ENCODE measurements at regions of chr10 and their contacts with region 1.

Region 1: GRCh38 chr10:114304017-114304570 is 65.0 kb downstream of the VWA2 start:
- DNase-seq: peak; percentile 73 to 90
- ATAC-seq: peak; percentile 80 to 91 (median 87)
- H3K4me3 ChIP-seq: peak overlapping the region in 9 of 10 donors; percentile 26 to 51 (median 44)
- H3K27ac ChIP-seq: peak overlapping the region in 8 of 10 donors; percentile 14 to 65 (median 44)
- H3K4me1 ChIP-seq: peaks cover 7 to 46% (median 28%) of the 10 kb centered on the region in 9 donors
- H3K27me3 ChIP-seq: no peaks in the 10 kb centered on the region
- CTCF ChIP-seq: peak; percentile 72 to 86 (median 78)

Region 2: DNA sequence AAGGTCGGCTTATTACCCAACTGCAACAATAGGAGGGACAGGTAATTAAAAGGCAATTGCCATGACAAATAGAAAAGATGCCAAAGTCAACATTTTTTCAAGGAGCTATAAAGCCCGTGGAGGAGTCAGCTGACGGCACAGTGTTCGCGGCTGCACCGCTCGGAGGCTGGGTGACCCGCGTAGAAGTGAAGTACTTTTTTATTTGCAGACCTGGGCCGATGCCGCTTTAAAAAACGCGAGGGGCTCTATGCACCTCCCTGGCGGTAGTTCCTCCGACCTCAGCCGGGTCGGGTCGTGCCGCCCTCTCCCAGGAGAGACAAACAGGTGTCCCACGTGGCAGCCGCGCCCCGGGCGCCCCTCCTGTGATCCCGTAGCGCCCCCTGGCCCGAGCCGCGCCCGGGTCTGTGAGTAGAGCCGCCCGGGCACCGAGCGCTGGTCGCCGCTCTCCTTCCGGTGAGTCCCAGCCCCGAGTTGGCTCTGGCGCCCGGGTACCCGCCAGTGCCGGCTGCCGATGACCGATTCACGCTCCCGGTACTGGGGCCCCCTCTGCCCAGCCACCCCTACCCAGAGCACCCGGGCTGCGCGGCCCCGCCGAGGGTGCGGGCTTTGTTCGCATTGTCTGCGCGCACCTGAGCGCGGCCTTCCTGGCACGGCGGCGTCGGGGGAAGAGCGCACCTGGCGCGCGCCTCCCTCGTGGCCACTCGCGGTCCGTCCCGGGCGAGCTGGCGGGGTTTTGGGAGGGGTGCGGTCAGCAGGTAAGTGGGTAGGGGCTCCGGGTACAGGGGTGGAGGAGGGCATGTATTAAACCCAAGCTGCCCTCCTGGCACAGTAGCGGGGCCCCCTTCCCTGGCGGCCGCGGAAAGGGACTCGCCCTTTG is 64.7 kb before region 1 on chr10 and contains the start of gene VWA2:
- intact Hi-C with region 1: no loop called
- DNase-seq: peak; percentile 14 to 47
- ATAC-seq: peak in 7 of 8 donors; percentile 7 to 79 (median 61)
- H3K4me3 ChIP-seq: peak within 1 kb of the TSS; percentile 30 to 52 (median 46)
- H3K27ac ChIP-seq: no peak within 1 kb of the TSS
- H3K4me1 ChIP-seq: peaks cover 0 to 16% (median 11%) of the 10 kb centered on the region in 9 donors
- H3K27me3 ChIP-seq: peaks cover 7 to 93% (median 75%) of the 10 kb centered on the region in 7 donors
- CTCF ChIP-seq: peak in 7 of 9 donors; percentile 13 to 58 (median 35)
- total RNA-seq, gene VWA2: 0.09 TPM in 1 of 10 donors, not detected in the others

Region 3: DNA sequence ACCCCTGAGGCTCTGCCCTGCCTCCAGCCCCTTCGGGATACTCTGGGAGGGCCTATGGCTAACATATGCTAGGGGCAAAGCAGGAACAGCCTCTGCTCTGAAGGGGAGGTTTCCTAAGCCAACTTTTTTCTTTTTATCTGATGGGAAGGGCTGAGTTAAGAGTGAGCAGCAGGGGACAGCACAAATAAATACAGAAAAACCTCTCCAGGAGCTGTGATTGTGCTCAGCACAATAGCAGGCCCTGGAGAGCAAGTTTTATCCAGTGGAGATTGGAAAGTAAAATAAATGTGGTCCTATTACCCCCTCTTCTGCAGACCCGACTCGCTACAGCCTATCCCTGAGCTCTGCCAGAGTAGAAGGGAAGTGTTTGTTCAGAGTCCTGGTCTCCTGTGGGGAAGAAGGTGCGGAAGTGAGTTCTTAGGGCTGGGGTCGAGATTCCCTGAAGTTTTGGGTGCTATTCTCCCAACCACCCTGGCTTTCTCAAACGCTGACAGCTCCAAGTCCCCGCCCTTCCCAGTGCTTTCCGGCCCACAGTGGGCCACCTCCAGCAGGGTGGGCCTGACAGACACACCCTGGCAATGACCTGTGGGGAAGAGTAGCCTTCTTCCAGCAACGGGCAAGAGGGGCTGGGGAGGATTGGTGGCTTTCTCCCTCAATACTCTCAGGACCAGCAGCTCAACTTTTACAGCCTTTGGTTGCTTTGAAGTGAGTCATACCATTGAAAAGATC is 123.2 kb after region 1 on chr10:
- intact Hi-C with region 1: loop called in 5 of 10 experiments (anchors 2 to 10 kb)
- DNase-seq: no peak
- ATAC-seq: peak; percentile 32 to 68 (median 53)
- H3K4me3 ChIP-seq: no peak overlapping the region
- H3K27ac ChIP-seq: peak overlapping the region in 9 of 10 donors; percentile 6 to 85 (median 64)
- H3K4me1 ChIP-seq: peaks cover 3 to 29% (median 20%) of the 10 kb centered on the region in 9 donors
- H3K27me3 ChIP-seq: no peaks in the 10 kb centered on the region
- CTCF ChIP-seq: peak in 4 of 9 donors; percentile 23 to 41 (median 39)

Region 4: GRCh38 chr10:114453576-114453975 is 149.5 kb after region 1 on chr10:
- intact Hi-C with region 1: loop called in 1 of 10 experiments (anchors 5 kb)
- DNase-seq: no peak
- ATAC-seq: no peak
- H3K4me3 ChIP-seq: no peak overlapping the region
- H3K27ac ChIP-seq: no peak overlapping the region
- H3K4me1 ChIP-seq: peaks cover 0 to 19% (median under 1%) of the 10 kb centered on the region in 9 donors
- H3K27me3 ChIP-seq: no peaks in the 10 kb centered on the region
- CTCF ChIP-seq: no peak

Region 5: DNA sequence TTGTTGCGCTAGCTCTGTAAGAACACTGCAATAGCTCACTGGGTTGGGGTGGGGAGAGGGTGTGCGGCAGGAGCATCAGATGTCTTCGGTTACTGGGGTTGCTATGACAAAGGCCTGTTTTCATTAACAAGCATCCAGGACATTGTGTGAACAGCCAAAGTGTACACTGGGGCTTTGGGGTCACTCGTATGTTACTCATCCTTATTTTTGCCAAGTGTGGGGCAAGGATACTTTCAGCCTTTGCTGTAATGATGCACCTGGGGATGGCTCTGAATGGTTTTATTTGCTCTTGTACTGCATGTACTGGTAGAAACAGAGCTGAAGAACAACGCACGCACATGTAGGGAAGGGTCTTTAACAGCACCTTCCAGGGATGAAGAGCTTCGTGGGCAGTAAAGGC is 173.2 kb after region 1 on chr10:
- intact Hi-C with region 1: no loop called
- DNase-seq: no peak
- ATAC-seq: peak in 7 of 8 donors; percentile 3 to 82 (median 27)
- H3K4me3 ChIP-seq: no peak overlapping the region
- H3K27ac ChIP-seq: peak overlapping the region in 9 of 10 donors; percentile 36 to 79 (median 69)
- H3K4me1 ChIP-seq: peaks cover 4 to 93% (median 51%) of the 10 kb centered on the region in 9 donors
- H3K27me3 ChIP-seq: no peaks in the 10 kb centered on the region
- CTCF ChIP-seq: no peak

Region 6: GRCh38 chr10:114795039-114795438 is 490.9 kb after region 1 on chr10:
- intact Hi-C with region 1: loop called in 3 of 10 experiments (anchors 5 to 10 kb)
- DNase-seq: no peak
- ATAC-seq: no peak
- H3K4me3 ChIP-seq: no peak overlapping the region
- H3K27ac ChIP-seq: no peak overlapping the region
- H3K4me1 ChIP-seq: no peaks in the 10 kb centered on the region
- H3K27me3 ChIP-seq: no peaks in the 10 kb centered on the region
- CTCF ChIP-seq: no peak